Esophagus squamous epithelium (tissue), 5 donors: ENCODE measurements at regions of chr3 and their contacts with region 1.

Region 1: GRCh38 chr3:157081681-157082210 is 78.2 kb downstream of the CCNL1 start:
- DNase-seq: no peak
- H3K4me3 ChIP-seq: peak overlapping the region in 1 of 4 donors; percentile 16
- H3K27ac ChIP-seq: peak overlapping the region; percentile 34 to 57 (median 44)
- H3K4me1 ChIP-seq: peaks cover 7 to 37% (median 18%) of the 10 kb centered on the region in 3 donors
- H3K27me3 ChIP-seq: no peaks in the 10 kb centered on the region
- CTCF ChIP-seq: peak; percentile 97 to 99 (median 98)
- POLR2A ChIP-seq: no peak

Region 2: GRCh38 chr3:156535162-156535627 is 546.6 kb before region 1 on chr3:
- intact Hi-C with region 1: loop called (anchors 10 kb)
- DNase-seq: no peak
- H3K4me3 ChIP-seq: no peak overlapping the region
- H3K27ac ChIP-seq: peak overlapping the region in 3 of 4 donors; percentile 49 to 64 (median 59)
- H3K4me1 ChIP-seq: peaks cover 0 to 6% (median 3%) of the 10 kb centered on the region in 3 donors
- H3K27me3 ChIP-seq: no peaks in the 10 kb centered on the region
- CTCF ChIP-seq: no peak
- POLR2A ChIP-seq: no peak

Region 3: DNA sequence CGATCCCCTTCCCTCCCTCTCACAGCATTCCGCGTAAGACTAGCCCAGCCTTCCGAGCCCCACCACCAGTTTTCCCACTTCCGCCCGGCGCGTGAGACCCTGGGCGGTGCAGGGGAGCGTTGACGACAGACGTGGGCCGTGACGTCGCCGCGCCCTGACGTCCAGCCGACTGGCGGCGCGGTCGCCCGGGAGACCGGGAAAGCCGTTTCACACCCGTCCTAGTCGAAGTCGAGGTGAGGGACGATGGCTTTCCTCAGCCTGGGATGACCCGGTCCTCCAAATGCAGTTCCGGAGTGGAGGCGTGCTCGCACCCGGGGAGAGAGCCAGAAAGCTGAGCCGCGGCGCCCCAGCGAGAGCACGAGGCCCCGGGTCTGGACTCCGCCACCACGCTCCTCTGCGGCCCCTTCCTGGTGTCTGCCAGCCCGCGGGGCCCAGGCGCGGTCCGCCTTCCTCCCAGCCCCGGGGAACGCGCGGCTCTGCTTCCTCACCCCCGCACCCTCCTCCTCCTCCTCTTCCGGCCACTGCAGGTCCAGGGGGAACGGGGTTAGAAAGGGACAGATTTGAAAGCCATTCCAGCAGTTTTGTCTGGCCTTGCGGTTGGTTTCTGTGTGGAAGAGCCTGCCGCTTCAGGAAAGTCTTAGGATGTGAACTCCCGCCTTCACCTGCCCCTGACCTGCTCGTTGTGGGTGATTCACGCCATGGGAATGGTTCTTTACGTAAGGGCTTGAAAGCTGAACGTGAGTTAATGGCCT is 255.4 kb before region 1 on chr3 and contains the start of gene LEKR1:
- intact Hi-C with region 1: loop called (anchors 10 kb)
- DNase-seq: no peak
- H3K4me3 ChIP-seq: peak within 1 kb of the TSS; percentile 56 to 87 (median 80)
- H3K27ac ChIP-seq: peak within 1 kb of the TSS; percentile 96 to 99 (median 96)
- H3K4me1 ChIP-seq: peaks cover 0 to 25% (median 3%) of the 10 kb centered on the region in 3 donors
- H3K27me3 ChIP-seq: no peaks in the 10 kb centered on the region
- CTCF ChIP-seq: peak in 1 of 6 experiments; percentile 4
- POLR2A ChIP-seq: peak in 2 of 4 donors; percentile 62 to 72
- total RNA-seq, gene LEKR1: 0.15 to 1.1 (median 0.57) TPM in 3 of 4 donors, not detected in the other

Region 4: GRCh38 chr3:157136647-157137387 is 55.1 kb after region 1 on chr3:
- intact Hi-C with region 1: loop called (anchors 5 kb)
- DNase-seq: no peak
- H3K4me3 ChIP-seq: no peak overlapping the region
- H3K27ac ChIP-seq: peak overlapping the region in 3 of 4 donors; percentile 32 to 51 (median 37)
- H3K4me1 ChIP-seq: peaks cover 9 to 37% (median 19%) of the 10 kb centered on the region in 3 donors
- H3K27me3 ChIP-seq: peaks cover 0 to 41% (median 0%) of the 10 kb centered on the region in 4 donors
- CTCF ChIP-seq: no peak
- POLR2A ChIP-seq: no peak

Region 5: DNA sequence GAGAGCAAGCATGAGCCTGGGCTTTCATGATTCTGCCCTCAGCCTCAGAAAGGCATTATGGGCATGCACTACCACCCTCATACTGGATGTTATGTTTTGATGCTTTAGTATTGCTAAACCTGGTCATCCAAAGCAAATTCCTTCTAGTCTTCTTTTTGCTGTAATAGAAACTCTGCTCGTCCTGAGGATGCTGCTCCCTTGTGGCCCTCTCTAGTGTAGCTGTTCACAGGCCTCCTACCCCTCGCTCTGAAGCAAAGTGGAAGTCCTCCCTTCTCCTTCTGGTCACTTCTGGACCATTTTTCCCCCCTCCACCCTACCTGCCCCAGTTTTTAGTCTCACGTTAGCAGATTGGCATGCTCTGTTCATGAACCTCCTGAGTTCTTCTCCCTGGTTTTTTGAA is 101.1 kb after region 1 on chr3:
- intact Hi-C with region 1: no loop called
- DNase-seq: no peak
- H3K4me3 ChIP-seq: no peak overlapping the region
- H3K27ac ChIP-seq: no peak overlapping the region
- H3K4me1 ChIP-seq: no peaks in the 10 kb centered on the region
- H3K27me3 ChIP-seq: no peaks in the 10 kb centered on the region
- CTCF ChIP-seq: no peak
- POLR2A ChIP-seq: no peak